ENCODE measurements at regions of chr1 and their contacts with region 1.

Region 1: DNA sequence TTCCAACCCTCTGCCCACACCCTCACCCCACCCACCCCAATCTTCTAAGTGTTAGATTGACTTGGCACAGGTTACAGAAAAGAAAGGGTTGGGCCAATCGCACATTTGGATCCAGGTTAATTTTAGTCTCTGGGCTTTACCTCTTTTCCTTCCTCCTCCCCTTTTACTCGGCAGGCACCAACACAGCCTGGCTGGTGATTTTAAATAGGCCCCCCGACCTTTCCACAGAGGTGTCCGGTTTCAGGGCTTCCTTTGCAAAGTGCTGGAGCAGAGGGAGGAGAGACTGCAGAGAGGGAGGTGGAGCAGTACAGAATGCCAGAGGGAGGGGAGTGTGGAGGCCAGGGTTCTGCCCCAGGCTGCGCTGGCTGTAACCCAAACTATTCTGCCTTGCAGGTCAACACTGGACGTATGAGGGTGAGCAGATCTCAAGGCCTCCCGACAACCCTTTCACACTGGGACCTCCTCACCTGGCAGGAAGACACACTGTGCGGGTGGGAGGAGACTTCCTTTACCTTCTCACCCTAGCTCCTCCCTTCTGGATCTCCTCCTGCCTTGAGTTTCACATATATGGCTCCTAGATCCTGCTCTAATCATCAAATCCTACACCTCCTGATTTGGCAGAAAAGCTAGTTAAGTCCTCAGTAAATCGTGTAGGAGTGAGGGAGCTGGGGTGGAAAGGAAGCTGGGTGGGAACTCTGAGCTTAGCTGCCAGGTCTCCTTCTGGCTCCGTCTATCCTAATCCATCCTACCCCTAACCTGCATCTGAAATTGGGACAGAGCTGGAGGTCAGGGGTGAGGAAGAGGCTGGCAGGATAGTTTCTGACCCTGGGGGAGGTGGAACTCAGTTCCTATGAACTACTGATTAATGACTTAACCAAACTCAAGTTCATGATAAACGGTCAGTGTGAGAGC is 2.4 kb downstream of the CA14 start:
- DNase-seq: no peak
- H3K4me3 ChIP-seq: peak overlapping the region in 30 of 59 donors; percentile 6 to 69 (median 56)
- H3K27ac ChIP-seq: peak overlapping the region in 58 of 59 donors; percentile 7 to 96 (median 87)
- H3K27me3 ChIP-seq: no peaks in the 10 kb centered on the region
- CTCF ChIP-seq: no peak

Region 2: DNA sequence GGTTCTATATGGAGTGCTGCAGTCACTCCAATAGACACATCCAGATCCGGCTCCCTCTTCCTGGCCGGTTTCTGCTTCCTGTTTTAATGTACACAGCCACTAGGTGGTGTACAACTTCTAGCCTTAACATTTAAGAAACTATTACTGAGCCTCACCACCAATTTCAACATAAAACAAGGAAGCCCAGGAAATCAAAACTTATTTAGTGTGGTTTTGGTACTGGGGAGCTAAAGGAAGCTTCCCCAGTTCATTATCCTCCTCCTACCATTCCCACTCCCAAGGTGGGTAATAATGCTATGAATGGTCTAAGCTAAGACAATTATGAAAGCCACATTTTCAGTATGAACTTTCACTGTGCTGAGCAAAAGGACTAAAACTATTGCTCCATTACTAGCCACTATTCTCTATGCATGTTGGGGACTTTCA is 297.9 kb before region 1 on chr1:
- intact Hi-C with region 1: no loop called
- DNase-seq: peak in 4 of 10 donors; percentile 52 to 70 (median 62)
- H3K4me3 ChIP-seq: peak overlapping the region in 2 of 59 donors; percentile 2 to 11
- H3K27ac ChIP-seq: peak overlapping the region in 56 of 59 donors; percentile 24 to 91 (median 78)
- H3K27me3 ChIP-seq: no peaks in the 10 kb centered on the region
- CTCF ChIP-seq: peak; percentile 80 to 97 (median 88)

Region 3: GRCh38 chr1:150141452-150141851 is 118.6 kb before region 1 on chr1:
- intact Hi-C with region 1: no loop called
- DNase-seq: no peak
- H3K4me3 ChIP-seq: no peak overlapping the region
- H3K27ac ChIP-seq: no peak overlapping the region
- H3K27me3 ChIP-seq: no peaks in the 10 kb centered on the region
- CTCF ChIP-seq: no peak

Region 4: GRCh38 chr1:150213170-150214098 is 46.6 kb before region 1 on chr1:
- intact Hi-C with region 1: loop called in 1 of 2 experiments (anchors 2 kb)
- DNase-seq: peak; percentile 91 to 98 (median 96)
- H3K4me3 ChIP-seq: peak overlapping the region; percentile 31 to 74 (median 59)
- H3K27ac ChIP-seq: peak overlapping the region in 58 of 59 donors; percentile 47 to 97 (median 86)
- H3K27me3 ChIP-seq: no peaks in the 10 kb centered on the region
- CTCF ChIP-seq: peak in 53 of 56 donors; percentile 25 to 71 (median 54)

Region 5: GRCh38 chr1:150281837-150282653 is 22.0 kb after region 1 on chr1 and contains the start of gene CIART:
- intact Hi-C with region 1: loop called (anchors 1 kb)
- DNase-seq: peak; percentile 91 to 99 (median 96)
- H3K4me3 ChIP-seq: peak within 1 kb of the TSS; percentile 57 to 93 (median 76)
- H3K27ac ChIP-seq: peak within 1 kb of the TSS; percentile 46 to 97 (median 91)
- H3K27me3 ChIP-seq: no peaks in the 10 kb centered on the region
- CTCF ChIP-seq: peak in 3 of 56 donors; percentile 7 to 24 (median 22)
- total RNA-seq, gene CIART: 5.3 to 26.5 (median 12.5) TPM

Region 6: DNA sequence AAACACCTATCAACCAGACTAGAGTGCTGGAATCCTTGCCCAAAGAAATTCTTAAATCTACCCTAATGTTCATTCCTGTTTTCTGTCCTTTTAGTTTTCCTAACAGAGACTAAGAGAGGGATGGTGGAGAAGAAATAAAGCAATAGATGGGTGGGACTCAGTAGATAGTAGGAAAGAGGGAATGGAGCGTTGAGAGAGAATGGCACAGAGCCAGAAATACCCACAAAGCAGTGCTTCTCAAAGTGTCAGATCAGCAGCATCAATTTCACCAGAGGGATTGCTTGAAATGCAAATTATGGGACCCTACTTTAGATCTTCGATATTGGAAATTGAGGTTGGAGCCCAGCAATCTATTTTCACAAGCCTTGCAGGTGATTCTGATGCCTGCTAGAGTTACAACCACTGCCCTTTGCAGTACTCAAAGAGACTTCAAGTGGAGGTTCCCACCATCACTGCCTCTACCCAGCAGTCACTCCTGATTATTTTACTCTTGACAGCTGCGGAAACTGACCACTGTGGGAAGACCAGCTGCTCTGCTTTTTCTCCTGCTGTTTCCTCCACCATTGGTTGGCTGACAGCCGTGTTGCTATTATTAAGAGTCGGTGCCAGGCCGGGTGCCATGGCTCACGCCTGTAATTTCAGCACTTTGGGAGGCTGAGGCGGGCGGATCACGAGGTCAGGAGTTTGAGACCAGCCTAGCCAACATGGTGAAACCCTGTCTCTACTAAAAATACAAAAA is 49.9 kb after region 1 on chr1:
- intact Hi-C with region 1: no loop called
- DNase-seq: no peak
- H3K4me3 ChIP-seq: no peak overlapping the region
- H3K27ac ChIP-seq: no peak overlapping the region
- H3K27me3 ChIP-seq: no peaks in the 10 kb centered on the region
- CTCF ChIP-seq: no peak

Region 7: GRCh38 chr1:150383631-150384324 is 123.8 kb after region 1 on chr1:
- intact Hi-C with region 1: no loop called
- DNase-seq: no peak
- H3K4me3 ChIP-seq: no peak overlapping the region
- H3K27ac ChIP-seq: no peak overlapping the region
- H3K27me3 ChIP-seq: no peaks in the 10 kb centered on the region
- CTCF ChIP-seq: no peak